Naive thymus-derived CD4-positive, alpha-beta T cell (primary cell): ENCODE measurements at regions of chrX and their contacts with region 1.

Region 1: GRCh38 chrX:48021026-48021900 is 14.5 kb downstream of the SPACA5 start:
- DNase-seq: peak; percentile 57 to 90 (median 87)
- ATAC-seq: peak; percentile 77
- H3K4me3 ChIP-seq: peak overlapping the region; percentile 96
- H3K4me3 Mint-ChIP-seq: peak overlapping the region; percentile 91 to 97 (median 94)
- H3K27ac ChIP-seq: peak overlapping the region; percentile 87
- H3K27ac Mint-ChIP-seq: peak overlapping the region; percentile 93 to 99 (median 98)
- H3K4me1 ChIP-seq: no peaks in the 10 kb centered on the region
- H3K4me1 Mint-ChIP-seq: peaks cover 6 to 29% (median 10%) of the 10 kb centered on the region in 7 donors
- H3K27me3 ChIP-seq: no peaks in the 10 kb centered on the region
- H3K27me3 Mint-ChIP-seq: peaks cover 0 to 6% (median 0%) of the 10 kb centered on the region in 5 donors

Region 2: DNA sequence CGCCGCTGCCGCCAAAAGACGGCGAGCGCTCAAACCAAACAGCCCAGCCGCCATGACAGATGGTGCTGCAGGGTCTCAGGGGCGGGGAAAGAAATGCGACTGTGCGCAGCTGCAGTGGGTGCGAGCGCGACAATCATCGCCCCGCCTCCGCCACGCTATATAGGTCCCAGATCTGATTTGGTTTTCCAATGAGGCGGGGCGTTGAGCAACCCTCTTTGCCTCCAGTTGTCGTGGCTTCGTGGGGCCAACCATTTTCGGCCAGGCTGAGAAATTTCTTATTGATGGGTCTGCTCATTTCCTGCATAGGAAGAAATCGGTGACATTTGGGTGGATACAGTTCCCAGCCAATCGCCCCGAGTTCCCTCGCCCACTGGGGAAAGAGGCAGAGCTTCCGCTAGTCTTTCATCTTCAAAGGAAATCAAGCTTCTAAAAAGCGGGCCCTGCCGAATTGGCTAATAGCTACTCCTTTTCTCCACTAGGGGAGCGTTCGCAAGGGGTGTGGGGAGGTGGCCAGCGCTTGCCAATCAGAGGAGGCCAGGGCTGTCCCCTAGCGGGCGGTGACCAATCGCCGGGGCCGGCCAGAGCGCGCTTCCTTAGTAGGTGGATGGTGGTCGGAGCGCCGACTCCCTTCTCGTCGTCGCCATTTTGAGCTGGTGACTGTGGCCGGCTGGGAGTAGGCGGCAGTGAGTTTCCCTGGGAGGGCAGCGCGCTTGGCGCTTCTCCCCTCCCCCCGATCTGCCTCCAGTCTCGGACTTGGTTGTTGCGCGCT is 876.5 kb before region 1 on chrX and contains the starts of genes NDUFB11 and RBM10:
- CTCF ChIA-PET with region 1: no interaction called
- POLR2A ChIA-PET with region 1: interaction called, 3 read pairs
- intact Hi-C with region 1: loop called (anchors 5 to 10 kb)
- DNase-seq: peak; percentile 64 to 90 (median 87)
- ATAC-seq: peak; percentile 95
- H3K4me3 ChIP-seq: peak within 1 kb of the TSS; percentile 77
- H3K4me3 Mint-ChIP-seq: peak within 1 kb of the TSS; percentile 92 to 99 (median 96)
- H3K27ac ChIP-seq: peak within 1 kb of the TSS; percentile 94
- H3K27ac Mint-ChIP-seq: peak within 1 kb of the TSS; percentile 93 to 99 (median 96)
- H3K4me1 ChIP-seq: peaks cover 6 to 12% of the 10 kb centered on the region in 2 donors
- H3K4me1 Mint-ChIP-seq: peaks cover 6 to 42% (median 26%) of the 10 kb centered on the region in 7 donors
- H3K27me3 ChIP-seq: no peaks in the 10 kb centered on the region
- H3K27me3 Mint-ChIP-seq: no peaks in the 10 kb centered on the region
- total RNA-seq, gene NDUFB11: 51.3 to 92.5 (median 55.2) TPM
- total RNA-seq, gene RBM10: 31.8 to 55.6 (median 47.6) TPM

Region 3: GRCh38 chrX:47836164-47837072 is 184.8 kb before region 1 on chrX and contains the start of gene ZNF81:
- CTCF ChIA-PET with region 1: interaction called, 10 read pairs
- POLR2A ChIA-PET with region 1: interaction called, 13 read pairs
- intact Hi-C with region 1: loop called (anchors 1 kb)
- DNase-seq: peak; percentile 73 to 91 (median 83)
- ATAC-seq: peak; percentile 96
- H3K4me3 ChIP-seq: peak within 1 kb of the TSS; percentile 67
- H3K4me3 Mint-ChIP-seq: peak within 1 kb of the TSS; percentile 96 to 99 (median 98)
- H3K27ac ChIP-seq: peak within 1 kb of the TSS; percentile 79
- H3K27ac Mint-ChIP-seq: peak within 1 kb of the TSS; percentile 94 to 99 (median 97)
- H3K4me1 ChIP-seq: peaks cover 4 to 6% of the 10 kb centered on the region in 2 donors
- H3K4me1 Mint-ChIP-seq: peaks cover 1 to 36% (median 26%) of the 10 kb centered on the region in 7 donors
- H3K27me3 ChIP-seq: no peaks in the 10 kb centered on the region
- H3K27me3 Mint-ChIP-seq: no peaks in the 10 kb centered on the region
- total RNA-seq, gene ZNF81: 11.0 to 14.7 (median 11.7) TPM

Region 4: GRCh38 chrX:47854474-47854873 is 166.8 kb before region 1 on chrX:
- CTCF ChIA-PET with region 1: interaction called, 9 read pairs
- POLR2A ChIA-PET with region 1: no interaction called
- intact Hi-C with region 1: loop called in 1 of 2 experiments (anchors 1 kb)
- DNase-seq: peak in 7 of 9 donors; percentile 10 to 46 (median 32)
- ATAC-seq: peak; percentile 65
- H3K4me3 ChIP-seq: no peak overlapping the region
- H3K4me3 Mint-ChIP-seq: no peak overlapping the region
- H3K27ac ChIP-seq: no peak overlapping the region
- H3K27ac Mint-ChIP-seq: peak overlapping the region in 2 of 9 donors; percentile 11 to 51
- H3K4me1 ChIP-seq: no peaks in the 10 kb centered on the region
- H3K4me1 Mint-ChIP-seq: peaks cover 0 to 6% (median 4%) of the 10 kb centered on the region in 7 donors
- H3K27me3 ChIP-seq: no peaks in the 10 kb centered on the region
- H3K27me3 Mint-ChIP-seq: no peaks in the 10 kb centered on the region

Region 5: GRCh38 chrX:47958761-47959342 is 62.4 kb before region 1 on chrX:
- CTCF ChIA-PET with region 1: no interaction called
- POLR2A ChIA-PET with region 1: no interaction called
- intact Hi-C with region 1: loop called in 1 of 2 experiments (anchors 1 kb)
- DNase-seq: peak in 7 of 9 donors; percentile 17 to 53 (median 28)
- ATAC-seq: peak; percentile 79
- H3K4me3 ChIP-seq: no peak overlapping the region
- H3K4me3 Mint-ChIP-seq: no peak overlapping the region
- H3K27ac ChIP-seq: no peak overlapping the region
- H3K27ac Mint-ChIP-seq: no peak overlapping the region
- H3K4me1 ChIP-seq: no peaks in the 10 kb centered on the region
- H3K4me1 Mint-ChIP-seq: peaks cover 0 to 3% (median 0%) of the 10 kb centered on the region in 7 donors
- H3K27me3 ChIP-seq: no peaks in the 10 kb centered on the region
- H3K27me3 Mint-ChIP-seq: no peaks in the 10 kb centered on the region

Region 6: GRCh38 chrX:47991263-47992092 is 29.8 kb before region 1 on chrX:
- CTCF ChIA-PET with region 1: no interaction called
- POLR2A ChIA-PET with region 1: no interaction called
- intact Hi-C with region 1: loop called in 1 of 2 experiments (anchors 2 kb)
- DNase-seq: peak in 7 of 9 donors; percentile 7 to 34 (median 25)
- ATAC-seq: peak; percentile 63
- H3K4me3 ChIP-seq: no peak overlapping the region
- H3K4me3 Mint-ChIP-seq: peak overlapping the region in 9 of 10 donors; percentile 16 to 73 (median 56)
- H3K27ac ChIP-seq: no peak overlapping the region
- H3K27ac Mint-ChIP-seq: peak overlapping the region; percentile 52 to 92 (median 77)
- H3K4me1 ChIP-seq: peaks cover 6 to 15% of the 10 kb centered on the region in 2 donors
- H3K4me1 Mint-ChIP-seq: peaks cover 18 to 47% (median 40%) of the 10 kb centered on the region in 7 donors
- H3K27me3 ChIP-seq: no peaks in the 10 kb centered on the region
- H3K27me3 Mint-ChIP-seq: no peaks in the 10 kb centered on the region

Region 7: DNA sequence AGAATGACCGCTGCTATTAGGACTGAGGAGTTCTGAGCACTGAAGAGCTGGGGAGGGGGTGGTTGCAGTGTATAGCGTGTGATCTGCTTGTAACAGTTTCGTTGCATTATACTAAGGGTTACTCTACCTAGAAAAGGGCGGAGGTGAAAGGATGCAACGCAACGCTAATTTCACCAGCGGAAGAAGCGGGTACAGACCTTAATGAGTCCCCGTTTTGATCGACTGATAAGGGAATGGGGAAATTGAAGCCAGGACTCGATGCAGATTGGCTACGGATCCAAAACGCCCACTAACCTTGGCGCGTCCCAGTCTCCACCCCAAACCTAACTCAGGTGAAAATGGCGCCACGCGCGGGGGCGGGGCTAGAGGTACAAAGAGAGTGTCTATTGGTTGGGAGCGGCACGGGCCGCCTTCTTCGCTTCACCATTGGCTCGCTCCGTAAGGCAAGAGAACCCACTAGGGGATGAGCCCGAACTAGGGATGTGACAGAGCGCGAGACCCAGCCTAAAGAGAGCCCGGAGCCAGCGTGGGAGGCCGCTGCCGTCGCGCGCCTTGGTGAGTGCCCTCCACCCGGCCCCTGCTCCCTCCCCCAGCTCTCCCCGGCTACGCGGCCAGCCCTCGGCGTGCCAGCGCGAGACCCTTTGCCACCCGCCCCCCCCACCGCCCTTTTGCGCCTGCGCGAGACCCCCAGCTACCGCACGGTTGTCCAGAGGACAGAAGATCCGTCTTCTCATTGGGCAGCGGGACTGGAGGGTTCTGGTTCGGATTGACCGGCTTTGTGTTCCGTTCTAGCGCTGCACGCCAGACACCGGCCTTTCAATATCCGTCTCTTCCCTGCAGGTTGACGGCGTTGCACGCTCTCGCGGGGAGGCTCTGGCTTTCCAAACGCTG is 500.3 kb after region 1 on chrX and contains the start of gene EBP:
- CTCF ChIA-PET with region 1: no interaction called
- POLR2A ChIA-PET with region 1: no interaction called
- intact Hi-C with region 1: loop called in 1 of 2 experiments (anchors 2 kb)
- DNase-seq: peak; percentile 82 to 96 (median 94)
- ATAC-seq: peak; percentile 98
- H3K4me3 ChIP-seq: peak within 1 kb of the TSS; percentile 78
- H3K4me3 Mint-ChIP-seq: peak within 1 kb of the TSS; percentile 73 to 93 (median 89)
- H3K27ac ChIP-seq: peak within 1 kb of the TSS; percentile 82
- H3K27ac Mint-ChIP-seq: peak within 1 kb of the TSS; percentile 90 to 99 (median 94)
- H3K4me1 ChIP-seq: peaks cover 12 to 19% of the 10 kb centered on the region in 2 donors
- H3K4me1 Mint-ChIP-seq: peaks cover 14 to 39% (median 34%) of the 10 kb centered on the region in 7 donors
- H3K27me3 ChIP-seq: no peaks in the 10 kb centered on the region
- H3K27me3 Mint-ChIP-seq: no peaks in the 10 kb centered on the region
- total RNA-seq, gene EBP: 33.3 to 188 (median 35.3) TPM